ENCODE measurements at regions of chr3 and their contacts with region 1.

Region 1: GRCh38 chr3:87563712-87564111 is 287.3 kb upstream of the POU1F1 start:
- DNase-seq: no peak
- ATAC-seq: 0 out of 3 replicates have a peak, but pooled peaks have one; percentile 49
- H3K4me3 ChIP-seq: no peak overlapping the region
- H3K27ac ChIP-seq: no peak overlapping the region; the same call in 2 of the 3 replicates
- H3K4me1 ChIP-seq: no peaks in the 10 kb centered on the region; a peak in 1 of 5 replicates
- H3K27me3 ChIP-seq: no peaks in the 10 kb centered on the region
- CTCF ChIP-seq: no peak
- EP300 ChIP-seq: no peak
- POLR2A ChIP-seq: no peak
- RAD21 ChIP-seq: no peak

Region 2: DNA sequence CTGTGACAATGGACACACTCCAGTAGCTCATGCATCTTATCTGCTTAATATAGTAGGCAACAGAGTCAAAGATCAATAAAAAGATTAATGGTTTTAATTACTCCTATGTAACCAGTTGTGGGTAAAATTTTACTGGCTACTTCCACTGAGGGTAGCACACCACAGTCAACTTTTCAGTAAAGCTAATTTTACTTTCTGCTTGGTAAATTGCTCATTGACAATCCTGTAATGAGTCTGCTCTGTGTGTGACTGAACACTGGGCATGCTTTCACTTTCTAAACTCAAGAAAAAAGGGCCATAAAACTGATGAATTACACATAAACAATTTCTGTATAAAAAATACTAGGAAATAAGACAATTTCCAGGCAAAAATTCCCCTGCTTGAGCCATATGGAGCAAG is 1411.1 kb before region 1 on chr3:
- CTCF ChIA-PET with region 1: no interaction called
- POLR2A ChIA-PET with region 1: no interaction called
- in situ Hi-C with region 1: no loop called
- intact Hi-C with region 1: no loop called
- DNase-seq: no peak
- ATAC-seq: no peak
- H3K4me3 ChIP-seq: no peak overlapping the region
- H3K27ac ChIP-seq: no peak overlapping the region
- H3K4me1 ChIP-seq: no peaks in the 10 kb centered on the region
- H3K27me3 ChIP-seq: no peaks in the 10 kb centered on the region
- CTCF ChIP-seq: no peak
- EP300 ChIP-seq: no peak
- POLR2A ChIP-seq: no peak
- RAD21 ChIP-seq: no peak

Region 3: DNA sequence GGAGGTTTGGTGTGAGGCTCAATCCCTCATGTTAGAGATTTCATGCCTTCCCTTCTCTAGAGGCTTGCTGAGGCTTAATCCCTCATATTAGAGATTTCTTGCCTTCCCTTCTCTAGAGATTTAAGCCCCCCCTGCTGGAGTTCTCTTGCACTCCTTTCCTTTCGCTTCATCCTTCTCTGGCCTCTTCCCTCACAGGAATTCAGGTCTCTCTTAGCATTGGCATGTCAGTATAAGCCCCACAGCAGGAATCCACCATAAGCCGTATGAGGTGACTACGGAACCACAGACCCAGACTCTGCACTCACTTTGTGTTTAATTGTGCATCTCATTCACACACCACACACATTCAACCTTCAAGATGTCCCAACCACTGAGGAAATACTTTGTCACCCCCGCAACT is 51.3 kb after region 1 on chr3:
- CTCF ChIA-PET with region 1: no interaction called
- POLR2A ChIA-PET with region 1: no interaction called
- in situ Hi-C with region 1: no loop called
- intact Hi-C with region 1: loop called (anchors 10 kb)
- DNase-seq: no peak
- ATAC-seq: no peak
- H3K4me3 ChIP-seq: no peak overlapping the region
- H3K27ac ChIP-seq: no peak overlapping the region
- H3K4me1 ChIP-seq: no peaks in the 10 kb centered on the region
- H3K27me3 ChIP-seq: no peaks in the 10 kb centered on the region
- CTCF ChIP-seq: no peak
- EP300 ChIP-seq: no peak
- POLR2A ChIP-seq: no peak
- RAD21 ChIP-seq: no peak

Region 4: DNA sequence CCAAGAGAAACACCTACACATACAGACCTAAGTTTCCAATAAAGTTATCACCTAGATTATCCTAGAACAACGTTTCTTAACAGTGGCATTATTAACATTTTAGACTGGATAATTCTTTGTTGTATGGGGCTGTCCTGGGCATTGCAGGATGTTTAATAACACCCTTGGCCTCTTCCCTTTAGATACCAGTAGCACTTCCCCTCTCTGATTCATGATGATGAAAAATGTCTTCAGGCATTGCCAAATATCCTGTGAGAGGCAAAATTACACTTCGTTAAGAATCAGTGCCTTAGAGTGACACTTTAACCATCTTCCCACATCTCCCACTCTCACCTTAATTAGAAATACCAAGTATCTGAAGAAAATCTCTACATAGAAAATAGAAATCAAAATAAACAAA is 142.5 kb after region 1 on chr3:
- CTCF ChIA-PET with region 1: no interaction called
- POLR2A ChIA-PET with region 1: no interaction called
- in situ Hi-C with region 1: no loop called
- intact Hi-C with region 1: no loop called
- DNase-seq: no peak
- ATAC-seq: no peak
- H3K4me3 ChIP-seq: no peak overlapping the region
- H3K27ac ChIP-seq: no peak overlapping the region
- H3K4me1 ChIP-seq: no peaks in the 10 kb centered on the region
- H3K27me3 ChIP-seq: no peaks in the 10 kb centered on the region
- CTCF ChIP-seq: no peak
- EP300 ChIP-seq: no peak
- POLR2A ChIP-seq: no peak
- RAD21 ChIP-seq: no peak

Region 5: GRCh38 chr3:88180398-88180999 is 616.8 kb after region 1 on chr3:
- CTCF ChIA-PET with region 1: no interaction called
- POLR2A ChIA-PET with region 1: no interaction called
- in situ Hi-C with region 1: no loop called
- intact Hi-C with region 1: loop called (anchors 10 kb)
- DNase-seq: peak in 2 of 4 experiments; percentile 16 to 60
- ATAC-seq: peak; percentile 86
- H3K4me3 ChIP-seq: no peak overlapping the region
- H3K27ac ChIP-seq: no peak overlapping the region
- H3K4me1 ChIP-seq: no peaks in the 10 kb centered on the region
- H3K27me3 ChIP-seq: no peaks in the 10 kb centered on the region
- CTCF ChIP-seq: peak; percentile 30 to 50 (median 45); a peak in 5 of 6 replicates
- EP300 ChIP-seq: no peak
- POLR2A ChIP-seq: no peak
- RAD21 ChIP-seq: peak; percentile 54 to 76